ENCODE measurements at regions of chr18 and their contacts with region 1.

Region 1: GRCh38 chr18:58781627-58782194 is 83.0 kb upstream of the ZNF532 start:
- DNase-seq: peak; percentile 72
- H3K4me3 ChIP-seq: no peak overlapping the region
- H3K27ac ChIP-seq: no peak overlapping the region
- H3K4me1 ChIP-seq: peaks cover 25% of the 10 kb centered on the region
- H3K27me3 ChIP-seq: no peaks in the 10 kb centered on the region
- CTCF ChIP-seq: peak; percentile 72 to 85

Region 2: GRCh38 chr18:58438161-58438957 is 343.4 kb before region 1 on chr18:
- CTCF ChIA-PET with region 1: no interaction called
- dilution Hi-C with region 1: no loop called
- in situ Hi-C with region 1: no loop called
- intact Hi-C with region 1: no loop called
- DNase-seq: peak; percentile 16
- H3K4me3 ChIP-seq: no peak overlapping the region
- H3K27ac ChIP-seq: no peak overlapping the region
- H3K4me1 ChIP-seq: no peaks in the 10 kb centered on the region
- H3K27me3 ChIP-seq: no peaks in the 10 kb centered on the region
- CTCF ChIP-seq: no peak

Region 3: GRCh38 chr18:58847383-58848071 is 65.8 kb after region 1 on chr18:
- CTCF ChIA-PET with region 1: no interaction called
- dilution Hi-C with region 1: no loop called
- in situ Hi-C with region 1: no loop called
- intact Hi-C with region 1: loop called (anchors 2 kb)
- DNase-seq: no peak
- H3K4me3 ChIP-seq: no peak overlapping the region
- H3K27ac ChIP-seq: no peak overlapping the region
- H3K4me1 ChIP-seq: peaks cover 13% of the 10 kb centered on the region
- H3K27me3 ChIP-seq: no peaks in the 10 kb centered on the region
- CTCF ChIP-seq: no peak

Region 4: GRCh38 chr18:58896268-58896667 is 114.6 kb after region 1 on chr18:
- CTCF ChIA-PET with region 1: no interaction called
- dilution Hi-C with region 1: no loop called
- in situ Hi-C with region 1: no loop called
- intact Hi-C with region 1: loop called (anchors 10 kb)
- DNase-seq: no peak
- H3K4me3 ChIP-seq: no peak overlapping the region
- H3K27ac ChIP-seq: no peak overlapping the region
- H3K4me1 ChIP-seq: peaks cover 10% of the 10 kb centered on the region
- H3K27me3 ChIP-seq: no peaks in the 10 kb centered on the region
- CTCF ChIP-seq: no peak

Region 5: DNA sequence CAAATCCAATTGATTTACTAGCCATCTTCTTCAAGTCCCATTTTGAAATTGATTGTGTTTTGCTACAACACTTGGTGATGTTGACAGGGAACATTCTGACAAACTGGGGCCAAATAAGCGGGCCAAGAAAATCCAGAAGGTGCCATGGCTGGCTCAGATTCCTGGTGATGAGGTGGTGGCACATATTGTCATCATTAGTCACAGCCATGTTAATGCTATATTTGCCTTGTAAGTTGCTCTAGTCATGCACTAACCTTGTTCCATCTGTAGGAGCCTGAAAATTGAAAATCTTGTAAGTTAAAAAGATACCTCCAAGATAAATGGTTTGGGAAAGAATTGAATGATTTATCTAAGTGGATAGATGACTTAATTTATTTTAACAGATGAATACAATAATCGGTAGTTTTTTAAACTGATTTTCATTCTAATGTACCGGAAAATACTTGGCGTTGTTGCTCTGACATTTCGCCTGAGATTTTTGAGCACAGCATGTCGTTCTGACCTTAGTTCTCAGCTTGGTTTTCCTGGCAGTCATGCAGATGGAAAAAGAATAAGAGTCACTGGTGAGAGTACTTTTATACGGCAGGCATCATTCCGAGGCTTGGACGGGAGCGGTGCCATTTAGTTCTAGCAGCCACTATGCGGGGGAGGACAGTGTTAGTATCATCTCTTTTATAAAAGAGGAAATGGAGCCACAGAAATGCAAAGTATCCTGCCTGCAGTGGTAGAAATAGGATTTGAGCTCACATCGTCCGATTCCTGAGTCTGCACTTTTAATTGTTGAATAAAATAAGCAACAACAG is 216.9 kb after region 1 on chr18:
- CTCF ChIA-PET with region 1: interaction called, 3 read pairs
- dilution Hi-C with region 1: no loop called
- in situ Hi-C with region 1: no loop called
- intact Hi-C with region 1: loop called (anchors 5 kb)
- DNase-seq: peak; percentile 62
- H3K4me3 ChIP-seq: peak overlapping the region; percentile 6 to 23 (median 12)
- H3K27ac ChIP-seq: peak overlapping the region; percentile 68
- H3K4me1 ChIP-seq: peaks cover 43% of the 10 kb centered on the region
- H3K27me3 ChIP-seq: no peaks in the 10 kb centered on the region
- CTCF ChIP-seq: peak in 1 of 2 donors; percentile 4

Region 6: GRCh38 chr18:59063300-59063906 is 281.7 kb after region 1 on chr18:
- CTCF ChIA-PET with region 1: no interaction called
- dilution Hi-C with region 1: loop called (anchors 5 kb)
- in situ Hi-C with region 1: loop called (anchors 5 kb)
- intact Hi-C with region 1: no loop called
- DNase-seq: no peak
- H3K4me3 ChIP-seq: no peak overlapping the region
- H3K27ac ChIP-seq: no peak overlapping the region
- H3K4me1 ChIP-seq: no peaks in the 10 kb centered on the region
- H3K27me3 ChIP-seq: no peaks in the 10 kb centered on the region
- CTCF ChIP-seq: no peak

Region 7: DNA sequence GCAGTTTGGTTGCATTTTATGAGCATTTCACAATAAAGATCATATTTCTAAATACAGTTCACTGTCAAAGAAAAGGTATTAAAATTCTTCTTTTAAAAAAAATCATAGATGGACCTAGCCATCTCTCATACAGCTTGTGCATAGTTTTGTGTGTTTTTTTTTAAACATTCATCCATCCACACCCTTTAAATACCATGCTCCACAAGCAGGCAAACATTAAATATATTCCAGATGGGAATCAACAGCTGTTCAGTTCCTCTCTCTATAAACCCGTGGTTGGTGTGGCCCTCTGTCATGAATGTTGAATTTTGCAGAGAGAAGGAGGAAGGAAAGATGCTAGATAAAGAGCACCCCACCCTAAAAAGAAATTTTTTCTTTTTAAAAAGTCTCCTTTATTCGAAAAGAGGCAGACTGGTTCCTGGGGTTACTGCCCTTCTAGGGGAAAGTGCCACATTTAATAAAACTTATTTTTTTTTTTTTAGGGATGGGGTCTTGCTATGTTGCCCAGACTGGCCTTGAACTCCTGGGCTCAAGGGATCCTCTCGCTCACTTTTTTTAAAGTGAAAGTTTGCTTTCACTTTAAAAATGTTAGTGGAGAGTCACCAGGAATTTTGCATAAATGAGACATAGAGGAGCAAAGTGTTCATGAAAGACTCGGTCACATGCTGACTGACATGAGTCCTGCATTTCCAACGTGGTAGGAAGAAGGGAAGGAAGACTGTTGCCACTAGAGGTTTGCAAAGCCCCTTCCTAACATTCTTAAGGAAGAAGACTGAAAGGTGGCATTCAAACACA is 651.3 kb after region 1 on chr18:
- CTCF ChIA-PET with region 1: no interaction called
- dilution Hi-C with region 1: no loop called
- in situ Hi-C with region 1: no loop called
- intact Hi-C with region 1: no loop called
- DNase-seq: no peak
- H3K4me3 ChIP-seq: no peak overlapping the region
- H3K27ac ChIP-seq: no peak overlapping the region
- H3K4me1 ChIP-seq: no peaks in the 10 kb centered on the region
- H3K27me3 ChIP-seq: no peaks in the 10 kb centered on the region
- CTCF ChIP-seq: no peak

Region 8: DNA sequence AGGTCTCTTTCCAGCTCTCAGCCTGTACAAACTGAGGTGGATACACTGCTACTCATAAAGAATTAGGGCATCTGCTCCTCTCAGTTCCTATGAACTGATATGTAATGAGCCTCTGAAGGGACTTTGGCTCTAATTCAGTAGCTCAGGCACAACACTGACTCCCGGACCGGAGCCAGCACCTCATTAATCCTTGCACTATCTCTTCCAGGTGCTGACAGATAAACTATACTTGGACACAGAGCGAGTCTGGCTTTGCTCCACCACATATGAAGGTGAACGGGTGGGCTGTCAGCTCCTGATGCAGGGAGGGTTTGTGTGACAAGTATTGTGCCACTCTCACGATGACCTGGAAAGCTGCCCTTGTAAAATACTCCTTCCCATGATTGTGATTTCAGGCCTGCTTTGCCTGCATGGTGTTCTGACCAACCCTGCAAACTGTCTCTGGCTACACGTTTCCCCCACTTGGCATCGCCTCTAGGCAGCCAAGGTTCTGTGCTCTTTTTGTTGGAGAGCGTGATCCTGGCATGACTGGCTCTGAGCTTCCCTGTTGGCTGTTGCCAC is 688.9 kb after region 1 on chr18:
- CTCF ChIA-PET with region 1: no interaction called
- dilution Hi-C with region 1: no loop called
- in situ Hi-C with region 1: no loop called
- intact Hi-C with region 1: no loop called
- DNase-seq: no peak
- H3K4me3 ChIP-seq: no peak overlapping the region
- H3K27ac ChIP-seq: no peak overlapping the region
- H3K4me1 ChIP-seq: no peaks in the 10 kb centered on the region
- H3K27me3 ChIP-seq: no peaks in the 10 kb centered on the region
- CTCF ChIP-seq: no peak

Measured in mammary epithelial cell (primary cell).